ENCODE measurements at regions of chr21 and their contacts with region 1.

Region 1: DNA sequence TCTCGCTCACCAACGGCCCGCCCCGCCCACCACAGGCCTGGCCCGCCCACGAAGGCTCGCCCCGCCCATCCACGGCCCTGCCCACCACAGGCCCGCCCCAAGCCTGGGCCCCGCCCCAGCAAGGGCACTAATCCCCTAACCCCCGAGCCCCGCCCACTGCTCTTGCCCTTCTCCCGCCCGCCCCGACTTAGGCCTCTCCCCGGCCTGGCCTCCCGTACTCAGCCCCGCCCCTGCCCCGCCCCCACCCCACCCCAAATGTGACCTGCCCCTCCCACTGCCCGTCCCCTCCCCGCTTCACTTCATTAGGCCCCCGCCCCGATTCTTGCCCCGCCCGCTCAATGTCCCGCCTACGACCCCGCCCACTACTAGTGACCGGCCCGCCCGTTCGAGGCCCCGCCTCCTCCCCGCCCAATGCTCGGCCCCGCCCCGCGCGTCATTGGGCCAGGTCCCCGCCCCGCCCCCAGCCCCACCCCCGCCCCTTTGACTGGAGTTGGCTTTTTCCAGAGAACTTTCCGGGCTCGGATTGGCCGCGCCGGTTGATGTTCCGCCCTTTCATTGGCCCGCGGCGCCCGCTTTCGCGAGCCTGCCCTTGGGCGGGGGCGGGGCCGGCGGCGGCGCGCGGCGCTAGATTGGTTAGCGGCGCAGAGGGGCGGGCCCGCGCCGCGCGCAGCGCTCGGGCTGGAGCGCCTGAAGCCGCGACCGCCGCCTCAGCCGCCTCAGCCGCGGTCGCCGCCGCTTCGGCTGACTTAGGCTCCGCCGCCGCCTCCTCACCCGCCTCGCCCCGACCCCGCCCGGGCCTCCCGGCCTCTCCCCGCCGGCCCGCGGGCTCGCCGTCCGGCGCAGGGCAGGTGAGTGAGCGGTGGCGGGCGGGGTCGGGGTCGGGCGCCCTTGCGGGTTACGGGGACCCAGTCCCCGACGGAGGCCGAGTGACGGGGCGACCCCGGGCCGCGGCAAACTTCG is at the start of gene PCBP3:
- DNase-seq: peak; percentile 91 to 100
- H3K4me3 ChIP-seq: peak within 1 kb of the TSS; percentile 32
- H3K4me1 ChIP-seq: peaks cover 2% of the 10 kb centered on the region; the same call in 1 of the 2 replicates
- H3K27me3 ChIP-seq: no peaks in the 10 kb centered on the region

Region 2: GRCh38 chr21:44338971-44339910 is 1304.1 kb before region 1 on chr21 and contains the start of gene CFAP410:
- in situ Hi-C with region 1: loop called (anchors 25 kb)
- DNase-seq: peak; percentile 83 to 94
- H3K4me3 ChIP-seq: peak within 1 kb of the TSS; percentile 73
- H3K4me1 ChIP-seq: peaks cover 3% of the 10 kb centered on the region
- H3K27me3 ChIP-seq: no peaks in the 10 kb centered on the region

Region 3: GRCh38 chr21:45236481-45236880 is 406.8 kb before region 1 on chr21:
- in situ Hi-C with region 1: no loop called
- DNase-seq: no peak
- H3K4me3 ChIP-seq: no peak overlapping the region
- H3K4me1 ChIP-seq: peaks cover 10% of the 10 kb centered on the region
- H3K27me3 ChIP-seq: peaks cover 8% of the 10 kb centered on the region

Region 4: DNA sequence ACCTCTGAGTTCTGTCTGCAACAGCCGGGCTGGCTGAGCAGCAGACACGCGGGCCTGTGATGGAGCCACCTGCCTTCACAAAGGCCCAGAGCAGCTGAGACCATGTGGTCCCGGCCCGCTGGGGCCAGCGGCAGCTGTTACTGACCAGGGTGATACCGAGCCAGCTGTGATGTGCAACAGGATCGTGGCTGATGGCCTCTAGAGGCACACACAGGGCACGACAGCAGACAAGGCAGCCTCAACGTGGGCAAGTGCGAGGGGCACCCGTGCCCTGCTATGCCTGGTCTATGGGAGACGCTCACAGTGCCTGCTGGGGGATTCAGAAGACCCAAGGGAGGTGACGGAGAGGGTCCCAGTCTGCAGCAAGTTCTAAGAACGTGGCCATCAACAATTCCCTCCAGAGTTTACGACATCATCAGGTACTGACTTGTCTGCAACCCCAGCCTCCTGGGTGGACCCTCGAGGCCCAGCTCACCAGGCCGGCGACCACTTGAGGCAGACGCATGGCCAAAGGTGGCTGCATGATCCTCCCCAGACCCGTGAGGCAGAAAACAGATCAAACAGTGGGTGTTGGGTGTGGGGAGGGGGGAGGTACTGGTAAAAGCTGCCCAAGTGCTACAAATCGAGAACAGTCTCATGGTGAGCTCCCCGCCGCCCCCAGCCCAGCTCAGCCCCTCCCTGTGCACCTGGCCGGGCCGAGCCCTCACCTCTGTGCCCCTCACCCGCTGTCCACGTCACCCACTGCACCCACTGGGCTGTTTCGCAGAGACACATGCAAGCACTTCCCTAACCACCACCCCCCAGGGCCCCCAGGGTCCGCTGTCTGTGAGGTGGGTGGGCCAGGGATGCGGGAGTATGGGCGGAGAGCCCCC is 361.7 kb before region 1 on chr21:
- in situ Hi-C with region 1: no loop called
- DNase-seq: no peak
- H3K4me3 ChIP-seq: no peak overlapping the region
- H3K4me1 ChIP-seq: no peaks in the 10 kb centered on the region
- H3K27me3 ChIP-seq: no peaks in the 10 kb centered on the region

Region 5: DNA sequence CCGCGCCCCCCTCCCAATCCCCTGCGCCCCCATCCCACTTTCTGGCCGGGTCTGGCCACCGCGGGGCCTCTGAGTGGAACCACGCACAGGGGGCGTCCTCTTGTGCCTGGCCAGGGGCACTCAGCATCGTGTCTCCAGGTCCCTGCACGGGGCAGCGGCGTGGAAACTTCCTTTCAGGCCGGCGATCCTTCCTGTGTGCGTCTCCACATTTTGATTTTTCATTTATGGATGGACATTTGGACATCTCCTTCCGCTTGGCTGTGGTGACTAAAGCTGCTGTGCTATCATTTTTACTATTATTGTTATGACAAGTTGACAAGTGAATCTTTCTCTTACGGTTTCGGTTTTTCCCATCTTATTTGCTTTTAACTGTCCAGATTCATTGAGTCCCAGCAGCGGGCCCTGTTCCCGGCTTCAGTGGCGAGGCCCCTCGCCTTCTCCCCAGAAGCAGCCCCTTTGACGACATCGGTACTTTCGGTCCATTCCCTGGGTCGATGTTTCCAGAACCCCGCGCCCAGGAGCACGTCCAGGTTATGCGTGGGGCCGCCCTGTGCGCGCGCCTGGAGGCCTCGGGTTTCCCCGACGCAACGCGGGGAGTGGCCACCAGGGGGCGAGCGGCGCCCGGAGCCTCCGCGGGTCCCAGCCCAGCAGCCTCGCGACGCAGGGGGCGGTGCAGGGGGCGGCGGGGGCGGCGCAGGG is 88.7 kb before region 1 on chr21:
- in situ Hi-C with region 1: loop called (anchors 5 kb)
- DNase-seq: peak; percentile 42 to 91
- H3K4me3 ChIP-seq: peak overlapping the region; percentile 29
- H3K4me1 ChIP-seq: no peaks in the 10 kb centered on the region; the same call in 1 of the 2 replicates
- H3K27me3 ChIP-seq: no peaks in the 10 kb centered on the region